Heart left ventricle (tissue), 16 donors: ENCODE measurements at regions of chr1 and their contacts with region 1.

Region 1: GRCh38 chr1:207828485-207829158 is 76.8 kb downstream of the CD46 start:
- DNase-seq: peak; percentile 79 to 85 (median 81)
- ATAC-seq: peak; percentile 26 to 61 (median 58)
- H3K4me3 ChIP-seq: no peak overlapping the region
- H3K27ac ChIP-seq: peak overlapping the region in 11 of 12 donors; percentile 15 to 100 (median 97)
- H3K4me1 ChIP-seq: peaks cover 13 to 98% (median 85%) of the 10 kb centered on the region in 12 donors
- H3K27me3 ChIP-seq: no peaks in the 10 kb centered on the region
- CTCF ChIP-seq: peak; percentile 77 to 95 (median 88)
- POLR2A ChIP-seq: peak in 1 of 2 donors; percentile 12

Region 2: DNA sequence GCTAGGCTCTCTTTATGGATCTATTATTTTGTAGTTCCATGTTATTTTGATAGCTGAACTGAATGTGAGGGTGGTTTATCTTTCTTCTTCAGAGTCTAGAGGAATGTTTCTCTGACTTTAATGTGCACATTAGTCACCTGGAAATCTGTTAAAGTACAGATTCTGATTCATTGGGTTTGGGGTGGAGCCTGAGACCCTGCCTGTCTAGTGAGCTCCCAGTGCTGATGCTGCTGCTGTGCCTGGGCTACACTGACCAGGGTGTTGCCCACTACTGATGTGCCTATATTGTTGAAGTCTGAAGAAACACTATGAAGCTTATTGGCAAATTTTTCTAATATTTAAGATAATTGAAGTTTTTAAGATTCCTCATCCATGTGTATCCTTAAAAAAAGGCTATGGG is 40.8 kb before region 1 on chr1:
- intact Hi-C with region 1: no loop called
- DNase-seq: no peak
- ATAC-seq: no peak
- H3K4me3 ChIP-seq: no peak overlapping the region
- H3K27ac ChIP-seq: no peak overlapping the region
- H3K4me1 ChIP-seq: no peaks in the 10 kb centered on the region
- H3K27me3 ChIP-seq: no peaks in the 10 kb centered on the region
- CTCF ChIP-seq: no peak
- POLR2A ChIP-seq: no peak

Region 3: GRCh38 chr1:207811920-207812720 is 16.5 kb before region 1 on chr1:
- intact Hi-C with region 1: no loop called
- DNase-seq: peak; percentile 66 to 86 (median 77)
- ATAC-seq: peak; percentile 14 to 63 (median 40)
- H3K4me3 ChIP-seq: peak overlapping the region in 5 of 12 donors; percentile 5 to 35 (median 21)
- H3K27ac ChIP-seq: peak overlapping the region; percentile 56 to 98 (median 81)
- H3K4me1 ChIP-seq: peaks cover 28 to 100% (median 97%) of the 10 kb centered on the region in 12 donors
- H3K27me3 ChIP-seq: no peaks in the 10 kb centered on the region
- CTCF ChIP-seq: peak; percentile 30 to 70 (median 48)
- POLR2A ChIP-seq: no peak

Region 4: DNA sequence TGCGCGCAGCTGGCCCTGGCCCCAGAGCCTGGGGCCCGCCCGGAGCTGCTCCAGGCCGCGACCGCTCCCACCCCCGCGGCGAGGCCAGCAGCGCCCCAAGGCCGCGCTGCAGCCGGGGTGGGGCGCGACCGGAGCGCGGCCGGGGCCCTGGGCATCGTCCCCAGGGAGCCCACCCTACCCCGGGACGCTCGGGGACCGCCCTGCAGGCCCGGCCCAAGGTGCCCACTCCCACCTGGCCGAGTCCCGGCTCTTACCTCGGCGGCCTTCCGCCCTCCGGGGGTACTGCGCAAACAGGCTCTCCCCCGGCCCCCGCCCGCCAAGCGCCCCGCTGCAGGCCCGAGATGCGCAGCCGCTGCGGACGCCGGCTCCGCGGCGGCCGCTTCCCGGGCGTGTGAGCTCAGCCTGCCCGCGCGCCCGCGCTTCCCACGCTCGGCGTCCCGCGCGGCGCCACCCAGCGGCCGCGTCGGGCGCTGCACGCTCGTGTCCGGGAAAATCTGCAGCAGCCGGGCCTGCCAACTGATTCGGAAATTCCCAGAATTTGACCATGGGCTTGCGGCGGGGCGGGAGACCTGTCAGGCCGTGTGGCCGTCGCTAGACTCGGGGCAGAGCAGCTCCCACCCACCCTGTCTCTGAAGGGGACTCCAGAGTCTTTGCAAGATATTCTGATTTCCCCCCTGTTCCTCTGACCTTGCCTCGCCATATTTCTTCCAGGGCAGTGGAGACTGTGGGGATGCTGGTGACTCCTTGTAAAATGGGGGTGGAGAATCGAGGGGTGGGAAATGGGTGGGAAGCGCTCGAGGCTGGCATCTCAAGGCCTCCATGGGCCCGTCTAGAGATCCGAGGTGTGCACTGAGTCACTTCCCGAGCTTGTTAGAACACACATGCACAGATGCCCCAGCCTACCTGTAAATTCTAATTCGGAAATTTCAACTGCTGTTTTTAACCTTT is 40.4 kb after region 1 on chr1:
- intact Hi-C with region 1: loop called (anchors 1 to 2 kb)
- DNase-seq: peak; percentile 78 to 91 (median 82)
- ATAC-seq: peak in 3 of 4 donors; percentile 9 to 73 (median 69)
- H3K4me3 ChIP-seq: peak overlapping the region; percentile 80 to 99 (median 92)
- H3K27ac ChIP-seq: peak overlapping the region; percentile 95 to 99 (median 96)
- H3K4me1 ChIP-seq: peaks cover 12 to 75% (median 50%) of the 10 kb centered on the region in 12 donors
- H3K27me3 ChIP-seq: no peaks in the 10 kb centered on the region
- CTCF ChIP-seq: peak; percentile 56 to 99 (median 83)
- POLR2A ChIP-seq: peak in 1 of 2 donors; percentile 56

Region 5: DNA sequence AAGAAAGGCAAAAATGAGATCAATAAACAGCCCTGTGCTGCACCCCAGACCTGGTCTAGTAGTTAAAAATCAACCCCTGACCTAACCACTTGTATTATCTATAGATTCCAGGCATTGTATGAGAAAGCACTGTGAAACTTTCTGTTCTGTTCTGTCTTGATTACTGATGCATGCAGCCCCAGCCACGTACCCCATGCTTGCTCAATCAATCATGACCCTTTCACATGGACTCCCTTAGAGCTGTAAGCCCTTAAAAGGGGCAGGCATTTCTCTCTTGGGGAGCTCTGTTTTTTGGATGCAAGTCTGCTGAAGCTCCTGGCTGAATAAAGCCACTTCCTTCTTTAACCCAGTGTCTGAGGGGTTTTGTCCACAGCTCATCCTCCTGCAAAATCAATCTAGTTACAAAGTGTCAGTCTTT is 106.6 kb after region 1 on chr1:
- intact Hi-C with region 1: no loop called
- DNase-seq: no peak
- ATAC-seq: no peak
- H3K4me3 ChIP-seq: no peak overlapping the region
- H3K27ac ChIP-seq: no peak overlapping the region
- H3K4me1 ChIP-seq: peaks cover 0 to 27% (median 2%) of the 10 kb centered on the region in 12 donors
- H3K27me3 ChIP-seq: no peaks in the 10 kb centered on the region
- CTCF ChIP-seq: no peak
- POLR2A ChIP-seq: no peak

Region 6: DNA sequence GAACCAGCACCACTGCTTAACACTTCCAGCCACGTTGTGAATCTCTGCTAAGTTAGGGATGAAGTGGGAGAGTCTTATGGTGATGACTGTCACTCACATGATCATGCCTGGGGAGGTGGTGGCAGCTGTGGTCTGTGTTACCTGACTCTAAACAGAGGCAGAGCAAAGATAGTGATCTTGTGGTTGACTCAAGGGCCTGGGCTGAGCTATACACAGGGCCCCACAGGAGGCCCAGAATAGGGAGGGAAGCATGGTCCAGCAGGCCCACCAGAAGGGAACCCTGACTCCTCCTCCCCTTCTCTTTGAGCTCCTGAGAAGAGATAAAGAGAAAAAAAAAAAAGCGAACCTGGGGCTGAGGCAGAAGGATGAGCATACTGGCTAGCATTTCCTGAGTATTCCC is 360.6 kb after region 1 on chr1:
- intact Hi-C with region 1: no loop called
- DNase-seq: no peak
- ATAC-seq: no peak
- H3K4me3 ChIP-seq: no peak overlapping the region
- H3K27ac ChIP-seq: no peak overlapping the region
- H3K4me1 ChIP-seq: peaks cover 0 to 40% (median 16%) of the 10 kb centered on the region in 12 donors
- H3K27me3 ChIP-seq: no peaks in the 10 kb centered on the region
- CTCF ChIP-seq: no peak
- POLR2A ChIP-seq: no peak